Left ventricle myocardium inferior (tissue), 1 donor: ENCODE measurements at regions of chr3 and their contacts with region 1.

Region 1: DNA sequence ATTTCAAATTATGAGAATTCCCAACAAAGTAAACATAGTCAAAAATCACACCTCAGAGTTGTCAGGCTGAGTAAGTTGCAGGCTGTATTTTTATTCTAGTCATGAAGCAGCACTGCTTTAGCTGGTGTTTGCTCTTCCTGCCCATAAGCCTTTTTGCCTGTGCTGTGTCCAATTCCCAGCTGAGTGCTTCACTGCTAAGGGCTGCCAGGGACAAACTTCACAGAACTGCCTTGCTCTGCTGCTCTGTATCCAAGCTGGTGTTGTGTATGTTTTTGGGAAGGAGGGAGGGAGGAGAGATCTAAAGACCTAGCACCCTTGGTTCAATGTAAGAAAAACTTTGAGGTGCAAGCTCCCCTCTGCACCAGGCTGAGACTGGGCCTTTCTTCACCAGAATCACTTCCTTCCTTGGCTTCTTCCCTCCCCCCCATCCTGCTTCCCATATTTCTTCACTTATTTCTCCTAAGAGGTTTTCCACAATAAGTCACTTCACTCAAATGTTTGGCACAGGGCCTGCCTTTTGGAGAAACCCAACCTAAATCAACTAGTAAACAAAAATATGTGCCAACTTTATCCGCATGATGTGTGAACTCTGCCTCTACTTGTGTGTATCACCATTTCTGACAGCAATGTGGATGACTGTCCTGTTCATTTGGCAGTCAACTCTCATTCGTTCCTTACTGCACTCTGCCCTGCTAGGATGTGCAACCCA is 156.1 kb downstream of the TBL1XR1 start:
- DNase-seq: no peak
- H3K4me3 ChIP-seq: no peak overlapping the region
- H3K27ac ChIP-seq: peak overlapping the region; percentile 63
- H3K4me1 ChIP-seq: peaks cover 48% of the 10 kb centered on the region
- H3K27me3 ChIP-seq: no peaks in the 10 kb centered on the region
- CTCF ChIP-seq: no peak

Region 2: DNA sequence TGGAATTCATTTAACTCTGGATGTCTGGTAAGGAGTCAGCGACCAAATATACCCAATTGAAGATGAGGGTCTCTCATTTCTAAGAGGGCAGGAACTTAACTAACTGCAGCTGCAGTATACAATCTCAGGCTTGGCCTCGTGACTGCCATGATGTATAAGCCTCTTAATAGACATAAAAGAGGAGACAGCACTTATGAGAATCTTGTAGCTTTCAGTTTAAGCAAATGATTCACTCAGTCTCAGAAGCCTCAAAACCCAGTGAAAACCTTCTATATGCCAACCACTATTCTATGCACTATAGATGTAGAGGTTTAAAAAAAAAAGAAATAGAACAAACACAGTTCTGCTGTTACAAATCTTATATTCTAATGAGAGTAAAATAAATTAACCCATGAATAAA is 357.8 kb before region 1 on chr3:
- intact Hi-C with region 1: no loop called
- DNase-seq: no peak
- H3K4me3 ChIP-seq: no peak overlapping the region
- H3K27ac ChIP-seq: no peak overlapping the region
- H3K4me1 ChIP-seq: no peaks in the 10 kb centered on the region
- H3K27me3 ChIP-seq: no peaks in the 10 kb centered on the region
- CTCF ChIP-seq: no peak

Region 3: GRCh38 chr3:178325330-178325729 is 1284.2 kb after region 1 on chr3:
- intact Hi-C with region 1: loop called (anchors 10 kb)
- DNase-seq: no peak
- H3K4me3 ChIP-seq: no peak overlapping the region
- H3K27ac ChIP-seq: peak overlapping the region; percentile 25
- H3K4me1 ChIP-seq: peaks cover 38% of the 10 kb centered on the region
- H3K27me3 ChIP-seq: no peaks in the 10 kb centered on the region
- CTCF ChIP-seq: peak; percentile 58